MCF 10A (cell line): ENCODE measurements at regions of chr5 and their contacts with region 1.

Region 1: GRCh38 chr5:74766849-74767578 is at the starts of genes GFM2 and NSA2:
- DNase-seq: peak; percentile 94
- H3K4me3 Mint-ChIP-seq: peak within 1 kb of the TSS; percentile 98
- H3K27ac Mint-ChIP-seq: peak within 1 kb of the TSS; percentile 92
- H3K4me1 Mint-ChIP-seq: peaks cover 20% of the 10 kb centered on the region
- H3K27me3 Mint-ChIP-seq: no peaks in the 10 kb centered on the region
- CTCF ChIP-seq: no peak
- total RNA-seq, gene GFM2: 26.4 and 31.9 TPM in 2 replicates
- total RNA-seq, gene NSA2: 84.9 and 106 TPM in 2 replicates

Region 2: GRCh38 chr5:74042959-74043358 is 724.1 kb before region 1 on chr5:
- CTCF ChIA-PET with region 1: no interaction called
- POLR2A ChIA-PET with region 1: no interaction called
- intact Hi-C with region 1: no loop called
- DNase-seq: peak; percentile 78
- H3K4me3 Mint-ChIP-seq: no peak overlapping the region
- H3K27ac Mint-ChIP-seq: no peak overlapping the region
- H3K4me1 Mint-ChIP-seq: peaks cover 21% of the 10 kb centered on the region
- H3K27me3 Mint-ChIP-seq: no peaks in the 10 kb centered on the region
- CTCF ChIP-seq: no peak

Region 3: DNA sequence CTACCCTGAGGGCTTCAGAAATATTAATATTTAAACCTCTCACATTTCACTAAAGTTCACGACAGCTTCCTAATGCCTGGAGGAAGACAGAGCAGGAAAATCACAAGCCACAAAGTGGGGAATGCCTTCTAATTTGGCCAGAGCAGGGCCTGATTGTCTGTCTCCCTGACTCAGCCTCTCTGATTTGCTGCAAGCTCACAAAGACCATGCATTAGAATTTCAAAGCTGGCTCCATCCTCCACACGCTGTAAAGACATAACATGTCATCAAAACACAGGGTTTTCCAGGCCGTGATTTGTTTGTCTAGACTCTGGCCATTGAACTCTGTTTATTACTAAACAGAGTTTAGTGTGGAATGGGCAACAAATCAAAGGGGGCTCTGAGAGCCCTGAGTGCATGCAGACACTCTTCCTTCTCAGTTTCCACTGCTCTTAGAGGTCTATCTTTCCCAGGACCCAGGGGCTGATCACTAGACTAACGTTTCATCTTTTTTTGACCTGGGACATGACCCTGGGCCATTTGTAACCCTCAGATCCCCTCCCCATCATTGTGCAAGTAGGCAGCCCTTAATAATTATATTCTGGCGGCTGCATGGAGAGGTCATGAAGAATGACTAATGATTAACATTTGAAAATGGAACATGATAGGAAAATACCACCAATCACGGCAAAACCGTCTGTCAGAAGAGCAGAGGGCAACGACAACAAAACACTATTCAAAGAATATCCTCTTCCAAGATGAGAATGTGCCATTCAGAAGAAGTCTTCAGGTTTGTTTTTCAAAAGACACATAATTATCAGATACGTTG is 266.7 kb before region 1 on chr5:
- CTCF ChIA-PET with region 1: no interaction called
- POLR2A ChIA-PET with region 1: no interaction called
- intact Hi-C with region 1: no loop called
- DNase-seq: no peak
- H3K4me3 Mint-ChIP-seq: no peak overlapping the region
- H3K27ac Mint-ChIP-seq: no peak overlapping the region
- H3K4me1 Mint-ChIP-seq: no peaks in the 10 kb centered on the region
- H3K27me3 Mint-ChIP-seq: no peaks in the 10 kb centered on the region
- CTCF ChIP-seq: no peak

Region 4: GRCh38 chr5:74673011-74673790 is 93.8 kb before region 1 on chr5:
- CTCF ChIA-PET with region 1: interaction called, 6 read pairs
- POLR2A ChIA-PET with region 1: interaction called, 8 read pairs
- intact Hi-C with region 1: loop called (anchors 5 kb)
- DNase-seq: peak; percentile 54
- H3K4me3 Mint-ChIP-seq: no peak overlapping the region
- H3K27ac Mint-ChIP-seq: no peak overlapping the region
- H3K4me1 Mint-ChIP-seq: peaks cover 13% of the 10 kb centered on the region
- H3K27me3 Mint-ChIP-seq: no peaks in the 10 kb centered on the region
- CTCF ChIP-seq: peak; percentile 64

Region 5: DNA sequence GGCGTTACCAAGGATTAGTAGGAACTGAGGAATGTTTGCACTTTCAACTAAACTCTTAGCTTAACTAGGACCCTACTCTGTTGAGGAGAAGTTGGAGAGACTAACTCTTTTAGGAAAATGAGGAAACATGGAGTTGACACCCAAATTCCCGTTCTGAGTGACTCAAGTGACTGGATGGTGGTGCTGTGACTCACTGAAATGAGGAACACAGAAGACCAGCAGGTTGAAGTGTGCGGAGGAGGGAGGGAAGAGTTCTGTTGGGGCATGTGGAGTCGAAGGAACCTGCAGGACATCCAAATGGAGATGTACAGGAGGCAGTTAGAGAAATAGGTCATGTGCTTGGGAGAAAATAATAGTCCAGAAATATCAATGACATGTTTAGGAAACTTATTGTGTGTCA is 73.8 kb before region 1 on chr5:
- CTCF ChIA-PET with region 1: no interaction called
- POLR2A ChIA-PET with region 1: no interaction called
- intact Hi-C with region 1: no loop called
- DNase-seq: peak; percentile 54
- H3K4me3 Mint-ChIP-seq: no peak overlapping the region
- H3K27ac Mint-ChIP-seq: peak overlapping the region; percentile 17
- H3K4me1 Mint-ChIP-seq: peaks cover 10% of the 10 kb centered on the region
- H3K27me3 Mint-ChIP-seq: no peaks in the 10 kb centered on the region
- CTCF ChIP-seq: no peak

Region 6: GRCh38 chr5:74851684-74852353 is 84.8 kb after region 1 on chr5:
- CTCF ChIA-PET with region 1: interaction called, 3 read pairs
- POLR2A ChIA-PET with region 1: interaction called, 20 read pairs
- intact Hi-C with region 1: no loop called
- DNase-seq: peak; percentile 77
- H3K4me3 Mint-ChIP-seq: peak overlapping the region; percentile 74
- H3K27ac Mint-ChIP-seq: peak overlapping the region; percentile 95
- H3K4me1 Mint-ChIP-seq: peaks cover 10% of the 10 kb centered on the region
- H3K27me3 Mint-ChIP-seq: no peaks in the 10 kb centered on the region
- CTCF ChIP-seq: no peak

Region 7: GRCh38 chr5:74895906-74896305 is 128.9 kb after region 1 on chr5:
- CTCF ChIA-PET with region 1: interaction called, 4 read pairs
- POLR2A ChIA-PET with region 1: interaction called, 16 read pairs
- intact Hi-C with region 1: no loop called
- DNase-seq: peak; percentile 96
- H3K4me3 Mint-ChIP-seq: no peak overlapping the region
- H3K27ac Mint-ChIP-seq: no peak overlapping the region
- H3K4me1 Mint-ChIP-seq: peaks cover 10% of the 10 kb centered on the region
- H3K27me3 Mint-ChIP-seq: no peaks in the 10 kb centered on the region
- CTCF ChIP-seq: no peak

Region 8: DNA sequence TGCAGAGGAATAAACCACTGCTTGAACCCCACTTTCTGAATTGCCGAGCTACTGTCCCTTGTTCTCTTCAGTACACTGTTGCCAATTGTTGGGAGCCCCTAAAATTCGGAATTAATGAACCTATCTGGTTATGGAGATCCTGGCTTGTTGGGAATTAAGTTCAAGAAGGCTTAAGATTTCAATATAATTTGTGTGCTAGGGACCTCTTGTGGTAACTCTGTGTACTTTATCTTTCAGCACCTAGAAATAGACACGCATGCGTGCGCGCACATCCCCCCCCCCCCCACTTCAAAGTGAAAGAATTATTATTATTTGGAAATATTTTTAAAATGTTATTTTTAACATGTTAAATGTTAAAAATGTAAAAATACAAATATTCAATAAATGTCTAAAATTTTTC is 152.5 kb after region 1 on chr5:
- CTCF ChIA-PET with region 1: interaction called, 18 read pairs
- POLR2A ChIA-PET with region 1: interaction called, 4 read pairs
- intact Hi-C with region 1: loop called (anchors 1 kb)
- DNase-seq: peak; percentile 58
- H3K4me3 Mint-ChIP-seq: no peak overlapping the region
- H3K27ac Mint-ChIP-seq: no peak overlapping the region
- H3K4me1 Mint-ChIP-seq: peaks cover 7% of the 10 kb centered on the region
- H3K27me3 Mint-ChIP-seq: peaks cover 6% of the 10 kb centered on the region
- CTCF ChIP-seq: peak; percentile 56

Region 9: GRCh38 chr5:74934949-74935751 is 168.1 kb after region 1 on chr5:
- CTCF ChIA-PET with region 1: no interaction called
- POLR2A ChIA-PET with region 1: no interaction called
- intact Hi-C with region 1: no loop called
- DNase-seq: peak; percentile 25
- H3K4me3 Mint-ChIP-seq: no peak overlapping the region
- H3K27ac Mint-ChIP-seq: no peak overlapping the region
- H3K4me1 Mint-ChIP-seq: no peaks in the 10 kb centered on the region
- H3K27me3 Mint-ChIP-seq: no peaks in the 10 kb centered on the region
- CTCF ChIP-seq: peak; percentile 12